ENCODE measurements at regions of chr22 and their contacts with region 1.

Region 1: DNA sequence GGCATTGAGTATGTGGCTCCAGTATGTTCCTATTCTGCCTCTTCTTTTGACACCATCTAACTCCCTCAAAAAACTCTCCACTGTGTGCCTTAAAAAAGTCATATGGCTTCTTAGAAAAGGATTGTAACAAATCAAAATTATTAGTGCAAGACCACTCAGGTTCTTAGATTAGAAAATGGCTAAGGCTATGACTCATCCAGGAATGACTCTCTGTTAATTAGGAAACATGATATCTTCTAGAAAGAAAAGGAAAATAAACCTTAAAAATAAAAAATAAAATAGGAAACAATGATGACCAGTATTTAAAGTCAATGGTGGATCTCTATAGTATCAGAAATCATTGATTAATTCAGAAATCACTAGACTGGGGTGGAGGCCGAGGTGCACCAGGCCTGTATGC is 21.7 kb downstream of the SLC25A17 start:
- DNase-seq: no peak
- ATAC-seq: no peak
- H3K4me3 ChIP-seq: no peak overlapping the region
- H3K27ac ChIP-seq: no peak overlapping the region
- H3K4me1 ChIP-seq: no peaks in the 10 kb centered on the region
- H3K27me3 ChIP-seq: no peaks in the 10 kb centered on the region
- CTCF ChIP-seq: no peak

Region 2: DNA sequence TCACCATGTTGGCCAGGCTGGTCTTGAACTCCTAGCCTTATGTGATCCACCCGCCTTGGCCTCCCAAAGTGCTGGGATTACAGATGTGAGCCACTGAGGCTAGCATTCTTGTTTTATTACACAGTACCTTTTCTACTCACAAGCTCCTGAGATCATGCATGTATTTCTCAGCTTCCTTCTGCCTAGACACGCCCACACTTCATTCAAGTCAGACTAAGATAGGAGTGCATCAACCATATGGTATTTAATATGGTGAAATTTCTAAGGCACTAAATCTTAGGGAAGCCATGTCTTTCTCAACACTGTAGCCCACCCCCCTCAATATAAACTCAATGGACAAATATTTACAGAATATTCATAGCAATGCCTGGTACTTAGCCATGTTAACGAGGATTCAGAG is 40.4 kb before region 1 on chr22:
- CTCF ChIA-PET with region 1: interaction called, 12 read pairs
- POLR2A ChIA-PET with region 1: no interaction called
- in situ Hi-C with region 1: no loop called
- intact Hi-C with region 1: no loop called
- DNase-seq: no peak
- ATAC-seq: no peak
- H3K4me3 ChIP-seq: no peak overlapping the region
- H3K27ac ChIP-seq: peak overlapping the region; percentile 80
- H3K4me1 ChIP-seq: peaks cover 27% of the 10 kb centered on the region
- H3K27me3 ChIP-seq: no peaks in the 10 kb centered on the region
- CTCF ChIP-seq: no peak

Region 3: DNA sequence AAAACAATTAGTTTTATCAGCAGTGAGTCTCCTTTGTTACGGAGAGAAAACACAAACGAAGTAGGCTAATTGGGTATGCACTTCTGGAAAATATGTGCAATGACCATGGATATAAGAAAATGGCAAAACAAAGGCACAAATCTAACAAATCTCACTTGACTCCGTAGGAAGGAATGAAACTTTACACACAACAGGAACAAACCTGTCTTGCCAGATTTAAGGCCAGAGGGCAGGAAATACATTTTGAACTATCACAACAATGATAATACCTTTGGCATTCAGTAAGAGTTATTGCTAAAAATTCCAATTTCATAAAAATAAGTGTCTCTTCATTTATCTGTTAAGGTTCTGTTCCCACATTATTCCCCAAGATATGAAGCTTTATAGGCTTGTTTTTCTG is 14.9 kb before region 1 on chr22:
- CTCF ChIA-PET with region 1: no interaction called
- POLR2A ChIA-PET with region 1: no interaction called
- in situ Hi-C with region 1: no loop called
- intact Hi-C with region 1: no loop called
- DNase-seq: no peak
- ATAC-seq: no peak
- H3K4me3 ChIP-seq: no peak overlapping the region
- H3K27ac ChIP-seq: no peak overlapping the region
- H3K4me1 ChIP-seq: no peaks in the 10 kb centered on the region
- H3K27me3 ChIP-seq: no peaks in the 10 kb centered on the region
- CTCF ChIP-seq: no peak

Measured in Panc1 (cell line).